ENCODE measurements at regions of chr7 and their contacts with region 1.

Region 1: DNA sequence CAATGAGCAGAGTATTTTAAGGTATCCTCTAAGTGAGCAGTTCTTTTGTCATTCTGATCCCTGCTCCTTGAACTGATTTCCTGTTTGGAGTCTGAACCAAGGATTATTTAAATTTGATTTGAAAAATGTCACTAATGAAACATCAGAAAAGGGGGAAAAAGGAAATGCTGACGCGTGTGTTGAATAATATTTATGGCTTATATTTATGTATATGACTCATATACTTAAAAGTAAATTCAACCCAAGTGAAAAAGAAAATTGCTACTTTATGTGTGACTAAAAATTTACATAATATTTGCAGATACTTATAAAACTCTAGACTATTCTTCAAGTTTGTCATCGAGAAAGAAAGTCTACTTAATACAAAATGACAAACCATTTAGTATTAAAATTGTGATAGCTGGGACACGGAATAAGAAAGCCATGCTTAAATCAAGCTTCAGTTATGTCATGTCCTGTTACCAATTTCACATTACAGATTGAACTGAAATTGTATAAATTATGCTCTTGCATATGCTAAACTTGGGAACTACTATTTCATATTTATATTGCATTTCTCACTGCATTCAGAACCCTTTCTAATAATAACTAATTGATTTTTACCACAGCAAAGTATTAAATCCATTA is 649.9 kb downstream of the MAGI2 start:
- DNase-seq: no peak
- H3K4me3 ChIP-seq: no peak overlapping the region
- H3K27ac ChIP-seq: no peak overlapping the region
- H3K4me1 ChIP-seq: no peaks in the 10 kb centered on the region
- H3K27me3 ChIP-seq: no peaks in the 10 kb centered on the region
- CTCF ChIP-seq: no peak
- POLR2A ChIP-seq: no peak

Region 2: GRCh38 chr7:78333530-78334425 is 469.8 kb before region 1 on chr7:
- intact Hi-C with region 1: loop called (anchors 5 kb)
- DNase-seq: no peak
- H3K4me3 ChIP-seq: no peak overlapping the region
- H3K27ac ChIP-seq: no peak overlapping the region
- H3K4me1 ChIP-seq: no peaks in the 10 kb centered on the region
- H3K27me3 ChIP-seq: no peaks in the 10 kb centered on the region
- CTCF ChIP-seq: no peak
- POLR2A ChIP-seq: no peak

Region 3: DNA sequence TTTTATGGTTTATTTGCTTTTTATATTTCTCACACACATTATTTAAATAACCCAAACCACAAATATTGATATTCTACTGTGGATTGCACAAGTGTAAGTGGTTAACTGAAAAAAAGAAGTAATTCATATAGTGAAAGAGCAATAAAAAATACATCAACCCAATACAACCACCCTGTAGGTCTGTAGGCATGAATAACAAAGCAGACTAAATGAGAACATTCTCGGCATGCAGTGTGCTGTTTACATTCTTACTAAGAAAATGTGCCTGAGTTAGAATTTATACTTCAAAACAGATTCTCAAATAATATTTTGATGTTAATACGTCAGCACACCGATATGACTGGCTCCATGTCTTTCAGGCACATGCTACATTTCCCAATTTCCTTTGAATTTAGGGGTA is 11.0 kb before region 1 on chr7:
- intact Hi-C with region 1: no loop called
- DNase-seq: no peak
- H3K4me3 ChIP-seq: no peak overlapping the region
- H3K27ac ChIP-seq: no peak overlapping the region
- H3K4me1 ChIP-seq: no peaks in the 10 kb centered on the region
- H3K27me3 ChIP-seq: no peaks in the 10 kb centered on the region
- CTCF ChIP-seq: no peak
- POLR2A ChIP-seq: no peak